Right ventricle myocardium superior (tissue), 1 donor: ENCODE measurements at regions of chr5 and their contacts with region 1.

Region 1: DNA sequence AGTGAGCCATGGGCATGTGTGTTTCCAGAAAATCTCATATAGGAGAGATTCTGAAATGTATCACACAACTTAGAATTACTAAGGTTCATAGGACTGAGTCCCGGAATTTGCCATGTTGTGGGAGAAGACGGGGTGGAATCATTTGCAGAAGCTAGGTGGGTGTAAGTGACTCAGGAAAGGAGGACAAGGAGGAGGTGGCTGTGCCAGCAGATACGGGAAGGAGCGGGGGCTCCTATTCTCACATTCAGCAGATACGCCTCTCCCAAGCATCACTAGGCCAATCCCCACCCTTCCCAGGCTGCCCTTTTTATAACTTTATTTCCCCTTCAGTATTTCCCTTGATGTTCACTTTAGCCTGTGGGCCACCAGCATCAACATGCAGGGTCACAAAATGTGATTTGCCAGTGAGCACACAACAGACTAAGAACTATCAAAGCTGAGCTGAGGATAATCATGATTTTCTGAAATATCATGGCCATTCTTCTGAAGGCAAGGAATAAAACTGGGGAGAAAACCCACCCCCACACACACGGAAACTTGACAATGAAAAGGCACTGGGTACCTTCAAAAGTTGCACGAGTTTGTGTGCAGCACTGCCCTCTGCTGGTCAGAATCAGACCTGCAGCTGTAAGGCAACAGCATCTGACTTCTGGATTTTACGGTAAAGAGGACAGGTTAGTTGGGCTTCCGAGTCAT is 133.2 kb downstream of the MTX3 start:
- DNase-seq: peak; percentile 82
- ATAC-seq: peak; percentile 71

Region 2: DNA sequence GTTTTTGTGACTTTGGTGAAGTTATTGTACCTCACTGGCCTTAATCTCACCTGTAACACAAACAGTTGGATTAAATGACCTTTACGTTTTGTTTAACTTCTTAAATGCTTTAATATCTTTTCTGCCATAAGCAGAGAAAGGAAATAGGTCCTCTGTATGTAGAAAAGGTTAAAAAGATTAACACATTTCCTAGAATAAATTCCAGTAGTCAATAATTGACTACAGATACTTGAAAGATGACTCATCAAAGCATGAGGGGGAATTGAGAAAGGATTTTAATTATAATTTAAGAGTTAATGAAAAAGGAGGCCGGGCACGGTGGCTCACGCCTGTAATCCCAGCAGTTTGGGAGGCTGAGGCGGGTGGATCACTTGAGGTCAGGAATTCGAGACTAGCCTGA is 204.0 kb before region 1 on chr5:
- intact Hi-C with region 1: no loop called
- DNase-seq: no peak
- ATAC-seq: no peak

Region 3: GRCh38 chr5:79702606-79703382 is 155.1 kb before region 1 on chr5:
- intact Hi-C with region 1: loop called (anchors 10 kb)
- DNase-seq: no peak
- ATAC-seq: no peak

Region 4: GRCh38 chr5:80083101-80083890 is 225.4 kb after region 1 on chr5:
- intact Hi-C with region 1: loop called (anchors 10 kb)
- DNase-seq: peak; percentile 42
- ATAC-seq: peak; percentile 92